GM13977 (cell line): ENCODE measurements at regions of chr1 and their contacts with region 1.

Region 1: GRCh38 chr1:8910914-8911313 is 32.4 kb upstream of the ENO1 start:
- DNase-seq: no peak
- CTCF ChIP-seq: no peak

Region 2: GRCh38 chr1:8817406-8818324 is 93.2 kb before region 1 on chr1 and contains the start of gene RERE:
- in situ Hi-C with region 1: no loop called
- DNase-seq: peak; percentile 100
- CTCF ChIP-seq: peak; percentile 17

Region 3: GRCh38 chr1:8858888-8859706 is 51.8 kb before region 1 on chr1:
- in situ Hi-C with region 1: no loop called
- DNase-seq: no peak
- CTCF ChIP-seq: peak; percentile 62

Region 4: DNA sequence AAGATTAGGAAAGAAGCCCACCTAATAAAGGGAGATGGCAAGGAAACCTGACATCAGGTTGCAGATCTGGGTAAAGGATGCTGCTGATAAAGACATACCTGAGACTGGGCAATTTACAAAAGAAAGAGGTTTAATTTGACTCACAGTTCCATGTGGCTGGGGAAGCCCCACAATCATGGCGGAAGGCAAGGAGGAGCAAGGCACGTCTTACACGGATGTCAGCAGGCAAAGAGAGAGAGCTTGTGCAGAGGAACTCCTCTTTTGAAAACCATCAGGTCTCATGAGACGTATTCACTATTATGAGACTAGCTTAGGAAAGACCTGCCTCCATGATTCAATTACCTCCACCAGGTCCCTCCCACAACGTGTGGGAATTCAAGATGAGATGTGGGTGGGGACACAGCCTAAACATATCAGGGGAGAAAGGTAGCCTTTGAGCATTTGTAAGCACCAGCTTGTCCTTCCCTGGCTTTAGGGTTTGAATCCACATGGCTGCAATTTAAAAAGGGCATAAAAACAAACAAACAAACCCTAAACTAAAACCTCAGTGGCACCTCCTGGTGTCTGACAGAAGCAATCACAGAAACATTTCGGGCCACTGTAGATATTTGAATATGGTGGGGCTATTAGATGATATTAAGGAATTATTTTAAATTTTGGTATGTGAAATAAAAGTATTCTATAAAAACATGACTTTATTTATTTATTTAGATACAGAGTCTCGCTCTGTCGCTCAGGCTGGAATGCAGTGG is 82.2 kb after region 1 on chr1:
- in situ Hi-C with region 1: loop called (anchors 10 kb)
- DNase-seq: no peak
- CTCF ChIP-seq: peak; percentile 4

Region 5: GRCh38 chr1:10152709-10153284 is 1241.9 kb after region 1 on chr1:
- in situ Hi-C with region 1: no loop called
- DNase-seq: peak; percentile 47
- CTCF ChIP-seq: peak; percentile 72